ENCODE measurements at regions of chr2 and their contacts with region 1.

Region 1: DNA sequence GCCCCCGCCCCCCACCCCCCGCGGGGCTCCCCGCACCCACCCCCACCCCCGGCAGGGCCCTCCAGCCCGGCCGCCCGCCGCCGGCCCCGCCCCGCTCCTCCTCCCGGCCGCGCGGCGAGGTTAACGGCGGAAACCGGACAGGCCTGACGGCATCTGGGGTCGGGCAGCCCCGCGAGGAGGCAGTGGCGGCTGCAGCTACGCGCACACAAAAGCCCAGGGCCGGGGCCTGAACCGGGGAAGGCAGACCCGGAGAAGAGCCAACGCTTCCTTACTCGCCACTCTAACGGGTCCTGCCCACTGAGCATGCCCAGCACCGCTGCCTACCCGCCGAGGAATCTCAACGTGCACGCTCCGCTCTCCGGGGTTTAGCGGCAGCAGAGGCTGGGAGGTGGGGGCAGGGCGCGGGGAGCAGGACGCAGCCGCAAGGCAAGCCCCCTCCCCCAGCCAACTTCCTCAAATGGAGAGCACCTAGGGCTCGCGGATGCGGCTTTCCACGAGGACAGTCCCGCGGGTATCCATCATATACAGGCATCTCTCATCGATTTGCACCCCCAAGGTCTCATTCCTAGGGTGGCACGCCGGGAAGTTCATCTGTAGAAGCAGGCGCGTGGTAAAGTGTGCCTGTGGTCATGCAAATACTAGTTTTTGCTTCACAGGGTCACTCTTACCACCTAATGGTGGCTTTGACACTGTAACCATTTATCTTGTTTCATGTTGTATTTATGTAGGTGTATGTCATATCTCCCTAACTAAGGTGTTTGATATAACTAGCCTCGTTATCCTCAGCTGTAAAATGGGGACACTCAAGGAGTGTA is at the start of gene MEMO1:
- DNase-seq: peak; percentile 87
- ATAC-seq: peak; percentile 80
- H3K4me3 ChIP-seq: peak within 1 kb of the TSS; percentile 96
- H3K27ac ChIP-seq: peak within 1 kb of the TSS; percentile 91
- H3K4me1 ChIP-seq: peaks cover 17% of the 10 kb centered on the region
- H3K27me3 ChIP-seq: no peaks in the 10 kb centered on the region
- CTCF ChIP-seq: no peak; a peak in 1 of 6 replicates
- EP300 ChIP-seq: peak; percentile 53 to 69
- POLR2A ChIP-seq: peak; percentile 90
- RAD21 ChIP-seq: 0 out of 2 replicates have a peak, but pooled peaks have one; percentile 6
- polyA plus RNA-seq, gene MEMO1: 73.9 to 99.1 TPM

Region 2: DNA sequence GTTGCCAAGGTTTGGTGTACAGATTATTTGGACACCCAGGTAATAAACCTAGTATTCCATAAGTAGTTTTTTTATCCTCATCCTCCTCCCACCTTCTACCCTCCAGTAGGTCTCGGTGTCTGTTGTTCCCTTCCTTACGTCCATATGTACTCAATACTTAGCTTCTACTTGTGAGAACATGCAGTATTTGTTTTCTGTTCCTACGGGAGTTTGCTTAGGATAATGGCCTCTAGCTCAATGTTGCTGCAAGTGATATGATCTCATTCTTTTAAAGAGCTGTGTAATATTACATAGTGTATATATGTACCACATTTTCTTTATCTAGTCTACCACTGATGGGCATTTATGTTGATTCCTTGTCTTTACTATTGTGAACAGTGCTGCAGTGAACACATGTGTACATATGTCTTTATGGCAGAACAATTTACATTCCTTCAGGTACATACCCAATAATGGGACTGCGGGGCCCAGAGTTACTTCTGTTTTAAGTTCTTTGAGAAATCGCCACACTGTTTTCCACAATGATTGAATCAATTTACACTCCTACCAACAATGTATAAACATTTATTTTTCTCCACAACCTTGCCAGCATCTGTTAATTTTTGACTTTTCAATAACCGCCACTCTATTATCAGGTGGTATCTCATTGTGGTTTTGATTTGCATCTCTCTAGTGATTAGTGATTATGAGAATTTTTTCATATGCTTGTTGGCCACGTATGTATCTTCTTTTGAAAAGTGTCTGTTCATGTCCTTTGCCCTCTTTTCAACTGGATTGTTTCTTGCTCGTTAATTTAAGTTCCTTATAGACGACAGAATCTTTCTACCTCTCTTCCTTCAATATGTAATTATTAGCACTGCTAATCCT is 88.1 kb before region 1 on chr2:
- CTCF ChIA-PET with region 1: interaction called, 11 read pairs
- POLR2A ChIA-PET with region 1: no interaction called
- RAD21 ChIA-PET with region 1: interaction called, 3 read pairs
- SMC1A ChIA-PET with region 1: interaction called, 7 read pairs
- in situ Hi-C with region 1: no loop called
- intact Hi-C with region 1: no loop called
- DNase-seq: peak; percentile 5
- ATAC-seq: peak; percentile 92
- H3K4me3 ChIP-seq: no peak overlapping the region
- H3K27ac ChIP-seq: no peak overlapping the region; the same call in 1 of the 2 replicates
- H3K4me1 ChIP-seq: peaks cover 3% of the 10 kb centered on the region; the same call in 1 of the 2 replicates
- H3K27me3 ChIP-seq: no peaks in the 10 kb centered on the region
- CTCF ChIP-seq: no peak
- EP300 ChIP-seq: no peak
- POLR2A ChIP-seq: no peak
- RAD21 ChIP-seq: no peak

Region 3: DNA sequence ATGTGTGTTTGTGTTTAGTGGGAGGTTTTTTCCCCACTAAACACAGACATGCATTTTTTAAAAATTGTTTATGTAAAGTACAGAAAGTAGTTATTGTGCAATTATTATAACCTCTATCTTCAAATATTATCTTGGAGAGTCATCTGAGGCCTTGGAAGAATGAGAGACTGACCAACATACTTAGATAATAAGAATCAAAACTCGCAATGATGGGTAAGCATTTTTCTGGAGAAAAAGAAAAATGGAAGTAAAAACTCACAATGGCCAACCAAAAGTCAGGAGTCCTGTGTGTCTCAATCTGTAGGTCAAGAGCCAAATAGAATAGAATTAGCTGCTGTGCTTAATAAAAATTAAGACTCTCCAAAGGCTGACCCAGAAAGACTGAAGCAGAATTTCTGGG is 43.1 kb before region 1 on chr2:
- CTCF ChIA-PET with region 1: interaction called, 3 read pairs
- POLR2A ChIA-PET with region 1: no interaction called
- RAD21 ChIA-PET with region 1: interaction called, 5 read pairs
- SMC1A ChIA-PET with region 1: interaction called, 4 read pairs
- in situ Hi-C with region 1: no loop called
- intact Hi-C with region 1: loop called (anchors 5 kb)
- DNase-seq: no peak
- ATAC-seq: no peak
- H3K4me3 ChIP-seq: no peak overlapping the region
- H3K27ac ChIP-seq: no peak overlapping the region
- H3K4me1 ChIP-seq: peaks cover 6% of the 10 kb centered on the region
- H3K27me3 ChIP-seq: no peaks in the 10 kb centered on the region
- CTCF ChIP-seq: no peak
- EP300 ChIP-seq: no peak
- POLR2A ChIP-seq: no peak
- RAD21 ChIP-seq: no peak

Region 4: DNA sequence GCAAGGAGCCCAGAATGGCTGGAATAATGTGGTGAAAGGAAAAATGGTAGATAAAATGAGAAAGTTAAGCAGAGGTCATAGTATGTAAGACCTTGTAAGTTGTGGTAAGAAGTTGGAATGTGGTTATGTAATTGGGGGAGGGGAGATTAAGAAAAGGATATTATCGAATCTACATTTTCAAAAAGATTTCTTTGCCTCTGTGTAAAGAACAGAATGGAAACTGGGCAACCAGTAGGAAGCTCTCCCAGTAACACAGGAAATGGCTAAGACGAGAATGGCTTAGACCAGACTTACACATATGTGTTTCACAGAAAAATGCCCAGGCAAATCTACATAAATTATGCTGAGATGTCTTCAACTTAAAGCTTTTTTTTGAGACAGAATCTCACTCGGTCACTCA is 13.2 kb before region 1 on chr2:
- CTCF ChIA-PET with region 1: interaction called, 5 read pairs
- POLR2A ChIA-PET with region 1: interaction called, 12 read pairs
- RAD21 ChIA-PET with region 1: interaction called, 7 read pairs
- SMC1A ChIA-PET with region 1: interaction called, 29 read pairs
- in situ Hi-C with region 1: no loop called
- intact Hi-C with region 1: no loop called
- DNase-seq: no peak
- ATAC-seq: peak; percentile 67
- H3K4me3 ChIP-seq: no peak overlapping the region
- H3K27ac ChIP-seq: peak overlapping the region; percentile 4; the same call in 1 of the 2 replicates
- H3K4me1 ChIP-seq: peaks cover 18% of the 10 kb centered on the region
- H3K27me3 ChIP-seq: no peaks in the 10 kb centered on the region
- CTCF ChIP-seq: no peak
- EP300 ChIP-seq: no peak
- POLR2A ChIP-seq: no peak
- RAD21 ChIP-seq: no peak

Region 5: DNA sequence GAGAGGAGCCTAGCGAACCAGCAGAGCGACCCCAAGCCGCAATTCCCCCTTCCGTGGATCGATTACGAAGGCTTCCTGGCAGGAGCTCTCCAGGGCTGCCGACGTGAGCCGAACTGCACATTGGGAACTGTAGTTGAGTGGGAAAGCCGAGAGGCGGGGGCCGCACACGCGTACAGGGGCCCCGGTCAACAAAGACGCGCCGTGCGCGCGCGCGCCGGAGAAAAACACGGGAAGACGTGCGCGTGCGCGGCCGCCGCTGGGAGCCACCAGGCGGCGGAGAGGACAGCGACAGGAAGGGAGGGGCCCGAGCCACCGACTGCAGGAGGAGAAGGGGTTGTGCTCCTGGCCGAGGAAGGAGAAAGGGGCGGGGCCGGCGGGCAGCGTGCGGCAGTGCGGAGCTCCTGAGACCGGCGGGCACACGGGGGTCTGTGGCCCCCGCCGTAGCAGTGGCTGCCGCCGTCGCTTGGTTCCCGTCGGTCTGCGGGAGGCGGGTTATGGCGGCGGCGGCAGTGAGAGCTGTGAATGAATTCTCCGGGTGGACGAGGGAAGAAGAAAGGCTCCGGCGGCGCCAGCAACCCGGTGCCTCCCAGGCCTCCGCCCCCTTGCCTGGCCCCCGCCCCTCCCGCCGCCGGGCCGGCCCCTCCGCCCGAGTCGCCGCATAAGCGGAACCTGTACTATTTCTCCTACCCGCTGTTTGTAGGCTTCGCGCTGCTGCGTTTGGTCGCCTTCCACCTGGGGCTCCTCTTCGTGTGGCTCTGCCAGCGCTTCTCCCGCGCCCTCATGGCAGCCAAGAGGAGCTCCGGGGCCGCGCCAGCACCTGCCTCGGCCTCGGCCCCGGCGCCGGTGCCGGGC is 52.7 kb after region 1 on chr2 and contains the start of gene SPAST:
- CTCF ChIA-PET with region 1: interaction called, 10 read pairs
- POLR2A ChIA-PET with region 1: interaction called, 8 read pairs
- RAD21 ChIA-PET with region 1: interaction called, 4 read pairs
- SMC1A ChIA-PET with region 1: interaction called, 14 read pairs
- in situ Hi-C with region 1: no loop called
- intact Hi-C with region 1: loop called (anchors 1 kb)
- DNase-seq: peak; percentile 90
- ATAC-seq: peak; percentile 97
- H3K4me3 ChIP-seq: peak within 1 kb of the TSS; percentile 87
- H3K27ac ChIP-seq: peak within 1 kb of the TSS; percentile 87
- H3K4me1 ChIP-seq: peaks cover 11% of the 10 kb centered on the region; the same call in 1 of the 2 replicates
- H3K27me3 ChIP-seq: no peaks in the 10 kb centered on the region
- CTCF ChIP-seq: peak; percentile 31 to 48 (median 37); a peak in 5 of 6 replicates
- EP300 ChIP-seq: no peak
- POLR2A ChIP-seq: peak; percentile 78
- RAD21 ChIP-seq: peak; percentile 5; the same call in 1 of the 2 replicates
- polyA plus RNA-seq, gene SPAST: 4.3 to 8.4 TPM

Region 6: GRCh38 chr2:32271063-32271462 is 260.2 kb after region 1 on chr2:
- CTCF ChIA-PET with region 1: no interaction called
- POLR2A ChIA-PET with region 1: no interaction called
- RAD21 ChIA-PET with region 1: no interaction called
- SMC1A ChIA-PET with region 1: no interaction called
- in situ Hi-C with region 1: no loop called
- intact Hi-C with region 1: no loop called
- DNase-seq: no peak
- ATAC-seq: no peak
- H3K4me3 ChIP-seq: no peak overlapping the region
- H3K27ac ChIP-seq: no peak overlapping the region
- H3K4me1 ChIP-seq: no peaks in the 10 kb centered on the region
- H3K27me3 ChIP-seq: no peaks in the 10 kb centered on the region
- CTCF ChIP-seq: no peak
- EP300 ChIP-seq: no peak
- POLR2A ChIP-seq: no peak
- RAD21 ChIP-seq: no peak

Measured in GM12878 (cell line).